Ovary (tissue), 10 donors: ENCODE measurements at regions of chr18 and their contacts with region 1.

Region 1: DNA sequence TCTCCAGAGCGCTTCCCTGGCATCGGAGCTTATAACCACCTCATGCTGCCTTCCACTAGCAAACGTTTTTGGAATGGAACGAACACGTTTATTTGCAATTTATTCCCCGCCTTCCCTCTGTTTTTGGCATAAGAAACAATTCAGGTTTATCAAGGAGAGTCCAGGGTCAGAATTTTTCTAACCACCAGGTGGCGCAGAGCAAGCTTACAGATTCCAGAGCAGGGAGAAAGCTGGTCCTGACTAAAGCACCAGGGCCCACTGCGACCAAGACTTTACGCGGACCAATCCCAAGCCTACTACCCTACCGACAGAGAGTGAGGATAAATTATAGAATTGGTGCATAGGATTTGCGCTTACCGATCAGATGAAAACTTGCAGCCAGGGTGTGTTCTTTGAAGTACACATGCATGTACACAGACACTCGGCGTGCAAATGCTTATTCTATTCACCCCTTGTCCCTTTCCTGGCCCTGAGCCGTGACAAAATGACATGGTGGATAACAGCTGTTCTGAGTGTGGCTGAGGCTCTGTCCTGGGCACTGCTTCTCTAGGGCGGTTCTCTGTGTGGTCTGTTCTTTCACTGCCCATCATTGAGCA is 34.7 kb downstream of the NAPG start:
- DNase-seq: peak; percentile 59 to 76 (median 73)
- H3K4me3 ChIP-seq: no peak overlapping the region
- H3K27ac ChIP-seq: no peak overlapping the region
- H3K4me1 ChIP-seq: no peaks in the 10 kb centered on the region
- H3K27me3 ChIP-seq: no peaks in the 10 kb centered on the region
- CTCF ChIP-seq: peak; percentile 41 to 64 (median 50)
- EP300 ChIP-seq: no peak
- POLR2A ChIP-seq: no peak

Region 2: DNA sequence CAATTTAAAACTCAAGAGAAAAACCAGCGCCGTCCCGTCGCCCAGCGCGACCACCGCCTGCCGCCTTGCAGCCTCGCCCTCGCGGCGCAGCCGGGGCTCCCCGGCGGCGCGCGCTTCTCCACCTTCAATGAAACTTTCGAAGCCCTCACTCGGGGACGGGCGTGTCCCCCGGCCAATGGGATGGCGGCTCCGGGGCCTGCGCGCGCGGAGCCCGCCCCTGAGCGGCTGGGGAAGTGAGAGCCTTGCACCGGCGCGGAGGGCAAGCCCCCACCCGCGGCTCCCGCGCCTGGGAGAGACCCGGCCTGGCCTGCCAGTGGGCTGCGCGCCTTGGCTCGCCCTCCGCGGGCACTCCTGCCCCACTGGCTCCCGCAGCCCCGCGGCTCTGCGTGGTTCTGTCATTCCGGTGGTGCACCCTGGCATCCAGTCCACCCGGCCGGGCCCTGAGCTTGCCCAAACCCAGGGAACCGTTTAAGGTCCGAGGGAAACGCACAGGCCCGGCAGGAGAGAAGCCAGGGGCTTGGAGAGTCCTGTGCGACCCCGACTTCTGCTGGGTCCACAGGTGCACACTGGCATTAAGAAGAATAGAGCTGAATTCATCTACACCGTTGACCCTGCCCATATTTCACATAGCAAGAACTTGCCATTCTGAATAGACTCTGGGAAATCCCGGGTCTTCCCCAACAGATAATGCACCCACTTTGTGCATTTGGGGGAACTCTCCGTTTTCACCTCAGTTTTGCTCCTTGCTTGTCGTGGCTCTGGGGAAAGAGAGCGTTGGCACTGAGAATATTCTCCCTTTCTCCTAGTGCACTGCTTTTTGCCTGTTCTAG is 589.1 kb after region 1 on chr18 and contains the start of gene PIEZO2:
- intact Hi-C with region 1: loop called in 2 of 4 experiments (anchors 10 kb)
- DNase-seq: peak; percentile 15 to 63 (median 44)
- H3K4me3 ChIP-seq: peak within 1 kb of the TSS; percentile 16
- H3K27ac ChIP-seq: no peak within 1 kb of the TSS
- H3K4me1 ChIP-seq: peaks cover 4% of the 10 kb centered on the region
- H3K27me3 ChIP-seq: no peaks in the 10 kb centered on the region
- CTCF ChIP-seq: no peak
- EP300 ChIP-seq: no peak
- POLR2A ChIP-seq: no peak
- total RNA-seq, gene PIEZO2: 2.4 to 8.5 (median 3.2) TPM

Region 3: DNA sequence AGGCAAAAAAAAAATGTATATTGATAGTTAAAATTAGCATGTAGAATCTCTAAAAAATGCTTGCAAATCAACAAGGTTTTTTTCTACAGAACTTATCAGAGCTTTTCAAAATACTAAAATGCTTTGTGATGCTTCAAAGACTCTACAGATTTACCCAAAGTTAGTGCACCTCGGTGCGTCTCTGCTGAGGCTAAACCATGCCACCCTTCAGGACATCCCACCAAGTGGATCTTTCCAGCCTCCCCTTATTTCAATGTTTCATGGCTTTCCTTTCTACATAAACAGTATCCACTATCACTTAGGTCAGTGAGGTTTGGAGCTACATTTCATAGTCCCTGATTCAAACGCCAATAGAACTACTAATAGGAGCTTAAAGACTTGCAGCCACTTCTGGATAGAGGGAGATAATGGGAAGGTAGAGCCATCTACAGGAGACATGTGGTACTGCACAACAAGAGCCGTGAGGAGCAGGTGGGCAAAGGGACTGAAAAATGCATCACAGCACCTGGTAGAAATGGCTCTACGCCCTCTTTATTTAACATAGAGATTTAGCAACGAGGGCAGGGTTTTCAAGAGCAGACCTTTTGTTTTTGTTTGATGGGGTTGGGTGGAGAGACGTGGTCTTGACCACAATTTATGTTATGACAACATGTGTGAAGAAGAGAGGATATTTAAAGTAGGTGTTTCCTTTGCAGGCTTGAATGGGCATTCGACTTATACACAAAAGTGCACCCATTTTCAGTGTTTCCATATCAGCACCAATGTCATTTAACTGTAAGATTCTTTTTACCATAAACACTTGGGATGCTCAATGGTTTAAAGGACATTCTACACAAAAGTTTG is 992.8 kb after region 1 on chr18:
- intact Hi-C with region 1: loop called in 2 of 4 experiments (anchors 10 kb)
- DNase-seq: no peak
- H3K4me3 ChIP-seq: no peak overlapping the region
- H3K27ac ChIP-seq: no peak overlapping the region
- H3K4me1 ChIP-seq: no peaks in the 10 kb centered on the region
- H3K27me3 ChIP-seq: no peaks in the 10 kb centered on the region
- CTCF ChIP-seq: peak; percentile 16 to 66 (median 18)
- EP300 ChIP-seq: no peak
- POLR2A ChIP-seq: no peak

Region 4: DNA sequence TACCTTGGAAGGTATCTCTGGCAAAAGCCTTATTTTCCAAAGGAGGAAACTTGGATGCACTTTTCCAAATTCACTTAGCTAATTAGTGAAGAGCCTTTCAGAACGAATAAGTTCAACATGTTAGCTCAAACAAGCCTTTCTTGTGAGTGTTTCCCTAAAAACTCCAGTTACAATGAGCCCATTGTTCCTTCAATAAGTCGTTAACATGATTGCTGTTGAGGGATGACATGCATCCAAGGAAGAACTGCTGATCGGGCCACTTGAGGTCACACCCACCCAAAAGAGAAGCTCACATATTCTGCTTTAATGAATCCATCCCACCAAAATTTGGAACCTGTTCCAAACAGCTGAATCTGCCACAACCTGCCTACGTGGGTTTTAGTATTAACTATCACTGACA is 1000.7 kb after region 1 on chr18:
- intact Hi-C with region 1: loop called in 3 of 4 experiments (anchors 10 kb)
- DNase-seq: no peak
- H3K4me3 ChIP-seq: no peak overlapping the region
- H3K27ac ChIP-seq: no peak overlapping the region
- H3K4me1 ChIP-seq: no peaks in the 10 kb centered on the region
- H3K27me3 ChIP-seq: no peaks in the 10 kb centered on the region
- CTCF ChIP-seq: no peak
- EP300 ChIP-seq: no peak
- POLR2A ChIP-seq: no peak